Endothelial cell of umbilical vein (primary cell): ENCODE measurements at regions of chr5 and their contacts with region 1.

Region 1: GRCh38 chr5:74640450-74640953 is at the start of gene ENC1:
- DNase-seq: peak; percentile 95
- H3K4me3 ChIP-seq: peak within 1 kb of the TSS; percentile 81 to 98 (median 82)
- H3K27ac ChIP-seq: peak within 1 kb of the TSS; percentile 91
- H3K4me1 ChIP-seq: peaks cover 54% of the 10 kb centered on the region
- H3K27me3 ChIP-seq: no peaks in the 10 kb centered on the region
- CTCF ChIP-seq: peak; percentile 16 to 72
- POLR2A ChIP-seq: peak; percentile 99
- total RNA-seq, gene ENC1: 42.2 and 53.6 TPM in 2 replicates

Region 2: DNA sequence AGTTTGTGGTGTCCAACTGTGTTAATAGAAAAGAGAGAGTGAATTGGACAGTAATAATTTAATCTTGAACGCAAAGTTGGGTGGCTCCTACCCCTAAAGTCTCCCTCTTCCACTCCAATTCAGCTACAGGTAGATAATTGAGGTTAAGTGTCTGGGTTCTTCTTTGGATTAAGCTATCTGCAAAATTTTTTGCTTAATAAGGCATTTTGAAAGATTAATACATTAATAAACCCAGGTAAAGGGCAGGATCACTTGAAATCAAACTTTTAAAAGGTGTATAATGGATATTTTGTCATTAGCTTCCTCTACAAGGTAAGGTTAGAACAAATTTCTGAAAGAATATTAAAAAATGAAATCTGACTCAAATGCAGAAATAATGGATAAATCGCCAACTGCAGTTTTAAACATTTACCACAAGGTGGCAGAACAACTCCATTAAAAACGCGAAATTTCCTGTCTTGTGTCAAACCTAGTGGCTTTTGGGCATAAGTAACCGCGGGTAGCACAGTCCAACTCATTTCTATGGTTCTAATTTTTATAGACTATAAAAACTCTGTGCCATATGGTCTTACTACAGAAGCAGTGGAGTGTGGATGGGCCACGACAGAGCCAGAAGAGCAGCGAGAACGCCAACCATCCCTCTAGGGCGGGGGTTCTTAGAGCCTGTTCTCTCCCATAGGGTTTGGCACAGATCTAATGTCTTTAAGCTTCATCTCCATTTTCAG is 738.0 kb before region 1 on chr5:
- CTCF ChIA-PET with region 1: interaction called, 78 read pairs
- POLR2A ChIA-PET with region 1: interaction called, 6 read pairs
- dilution Hi-C with region 1: no loop called
- intact Hi-C with region 1: loop called (anchors 1 kb)
- DNase-seq: peak; percentile 62
- H3K4me3 ChIP-seq: no peak overlapping the region
- H3K27ac ChIP-seq: no peak overlapping the region
- H3K4me1 ChIP-seq: no peaks in the 10 kb centered on the region
- H3K27me3 ChIP-seq: no peaks in the 10 kb centered on the region
- CTCF ChIP-seq: peak; percentile 42 to 45
- POLR2A ChIP-seq: no peak

Region 3: DNA sequence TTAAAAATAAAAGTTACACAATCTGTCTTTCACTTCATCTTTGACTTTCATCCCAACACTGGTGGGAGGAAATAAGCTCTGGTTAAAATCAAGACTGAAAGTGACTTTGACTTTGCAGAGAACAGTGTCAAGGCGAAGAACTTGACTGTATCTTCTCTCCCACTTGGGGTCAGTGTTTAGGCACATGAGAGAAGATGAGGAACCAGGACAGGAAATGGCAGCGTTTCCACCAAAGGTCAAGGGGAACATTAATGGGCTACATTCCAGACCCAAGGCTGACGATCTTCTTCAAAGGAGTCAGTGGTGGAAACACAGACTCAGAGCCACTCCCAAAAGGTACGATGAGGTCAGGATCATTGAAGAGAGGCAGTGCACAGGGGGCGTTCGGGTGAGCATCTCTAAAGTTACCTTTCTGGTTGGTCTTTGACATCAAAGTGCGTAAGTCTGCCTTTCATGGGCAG is 605.0 kb before region 1 on chr5:
- CTCF ChIA-PET with region 1: interaction called, 19 read pairs
- POLR2A ChIA-PET with region 1: no interaction called
- dilution Hi-C with region 1: no loop called
- intact Hi-C with region 1: loop called (anchors 1 kb)
- DNase-seq: peak; percentile 57
- H3K4me3 ChIP-seq: no peak overlapping the region
- H3K27ac ChIP-seq: no peak overlapping the region
- H3K4me1 ChIP-seq: peaks cover 2% of the 10 kb centered on the region
- H3K27me3 ChIP-seq: peaks cover 0 to 2% of the 10 kb centered on the region in 2 experiments
- CTCF ChIP-seq: peak in 1 of 2 donors; percentile 27
- POLR2A ChIP-seq: no peak

Region 4: DNA sequence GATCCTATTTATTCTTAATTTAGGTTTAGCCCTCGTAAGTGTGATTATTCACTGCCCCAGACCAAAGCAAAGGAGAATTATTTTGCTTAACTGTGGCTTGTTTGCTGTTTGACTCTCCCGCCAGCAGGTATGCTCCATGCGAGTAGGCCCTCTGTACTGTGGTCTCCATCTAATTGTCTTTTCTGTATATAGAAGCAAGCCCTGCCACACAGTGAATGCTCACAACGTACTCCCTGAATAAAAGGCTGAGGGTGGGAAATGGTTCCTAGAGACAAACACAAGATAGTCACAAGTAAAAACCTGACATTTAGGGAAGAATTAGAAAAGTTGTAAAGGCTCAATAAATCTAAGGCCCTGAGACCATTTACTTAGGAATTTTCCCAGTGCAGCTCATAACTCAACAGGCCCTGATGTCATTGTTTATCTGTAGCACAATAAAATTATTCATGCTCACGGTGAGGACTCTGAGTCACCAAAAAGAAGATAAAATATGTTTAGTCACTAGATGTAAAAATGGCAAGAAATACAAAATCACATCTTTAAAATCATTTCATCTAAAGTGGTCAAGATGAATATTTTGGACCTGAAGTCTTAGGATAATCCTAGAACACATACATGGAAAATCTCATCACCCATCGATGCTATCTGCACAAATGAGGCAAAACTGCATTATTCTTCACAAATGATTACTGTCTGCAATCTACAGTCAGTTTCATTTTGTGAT is 473.1 kb before region 1 on chr5:
- CTCF ChIA-PET with region 1: interaction called, 4 read pairs
- POLR2A ChIA-PET with region 1: no interaction called
- dilution Hi-C with region 1: no loop called
- intact Hi-C with region 1: loop called (anchors 2 kb)
- DNase-seq: peak; percentile 84
- H3K4me3 ChIP-seq: no peak overlapping the region
- H3K27ac ChIP-seq: peak overlapping the region; percentile 60
- H3K4me1 ChIP-seq: peaks cover 20% of the 10 kb centered on the region
- H3K27me3 ChIP-seq: peaks cover 2% of the 10 kb centered on the region in 2 experiments
- CTCF ChIP-seq: no peak
- POLR2A ChIP-seq: no peak

Region 5: DNA sequence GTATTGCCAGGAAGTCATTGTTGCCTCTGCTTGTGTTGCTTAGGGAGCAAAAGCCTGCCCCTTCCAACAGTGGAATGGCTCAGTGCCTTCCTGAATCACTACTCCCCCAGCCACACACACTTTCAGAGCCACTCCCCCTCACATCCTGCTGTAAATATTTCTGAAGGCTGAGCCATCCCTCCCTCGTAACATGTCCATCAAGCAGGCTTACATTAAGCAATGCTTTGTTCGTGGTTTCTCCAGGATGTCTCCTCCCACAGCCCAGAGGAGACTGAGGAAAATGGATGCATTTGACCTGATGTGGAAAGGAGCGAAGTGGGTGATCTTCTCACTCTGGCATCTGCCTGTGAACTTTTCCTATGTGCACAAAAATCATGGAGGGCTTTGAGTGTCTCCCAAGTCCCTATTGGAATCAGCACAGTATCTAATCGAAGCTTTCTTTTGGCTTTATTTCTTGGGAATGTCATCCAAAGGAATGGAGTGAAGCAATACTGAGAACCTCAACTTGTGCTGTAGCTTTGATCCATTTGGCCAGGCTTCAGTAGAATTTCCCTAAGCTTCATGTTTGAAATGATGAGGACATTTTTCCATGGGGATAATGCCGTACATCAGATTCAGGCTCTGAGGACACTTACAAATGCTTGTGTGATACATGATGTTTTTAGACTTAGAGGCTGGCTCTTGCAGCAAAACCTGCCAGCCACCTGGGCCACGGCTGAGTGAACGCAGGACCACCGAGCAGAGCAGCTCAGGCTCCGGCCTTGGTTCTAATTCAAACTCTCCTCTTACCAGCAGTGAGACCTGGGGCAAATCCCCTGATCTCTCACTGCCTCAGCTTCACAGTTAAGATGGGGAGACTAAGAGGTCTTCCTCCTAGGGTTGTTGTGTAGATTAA is 389.1 kb before region 1 on chr5:
- CTCF ChIA-PET with region 1: interaction called, 3 read pairs
- POLR2A ChIA-PET with region 1: interaction called, 4 read pairs
- dilution Hi-C with region 1: no loop called
- intact Hi-C with region 1: loop called (anchors 1 kb)
- DNase-seq: peak; percentile 89
- H3K4me3 ChIP-seq: no peak overlapping the region
- H3K27ac ChIP-seq: no peak overlapping the region
- H3K4me1 ChIP-seq: peaks cover 9% of the 10 kb centered on the region
- H3K27me3 ChIP-seq: peaks cover 4 to 5% of the 10 kb centered on the region in 2 experiments
- CTCF ChIP-seq: no peak
- POLR2A ChIP-seq: no peak

Region 6: GRCh38 chr5:74394916-74395781 is 245.4 kb before region 1 on chr5:
- CTCF ChIA-PET with region 1: interaction called, 20 read pairs
- POLR2A ChIA-PET with region 1: no interaction called
- dilution Hi-C with region 1: no loop called
- intact Hi-C with region 1: loop called (anchors 1 kb)
- DNase-seq: no peak
- H3K4me3 ChIP-seq: no peak overlapping the region
- H3K27ac ChIP-seq: no peak overlapping the region
- H3K4me1 ChIP-seq: peaks cover 4% of the 10 kb centered on the region
- H3K27me3 ChIP-seq: no peaks in the 10 kb centered on the region
- CTCF ChIP-seq: peak in 1 of 2 donors; percentile 33
- POLR2A ChIP-seq: no peak

Region 7: DNA sequence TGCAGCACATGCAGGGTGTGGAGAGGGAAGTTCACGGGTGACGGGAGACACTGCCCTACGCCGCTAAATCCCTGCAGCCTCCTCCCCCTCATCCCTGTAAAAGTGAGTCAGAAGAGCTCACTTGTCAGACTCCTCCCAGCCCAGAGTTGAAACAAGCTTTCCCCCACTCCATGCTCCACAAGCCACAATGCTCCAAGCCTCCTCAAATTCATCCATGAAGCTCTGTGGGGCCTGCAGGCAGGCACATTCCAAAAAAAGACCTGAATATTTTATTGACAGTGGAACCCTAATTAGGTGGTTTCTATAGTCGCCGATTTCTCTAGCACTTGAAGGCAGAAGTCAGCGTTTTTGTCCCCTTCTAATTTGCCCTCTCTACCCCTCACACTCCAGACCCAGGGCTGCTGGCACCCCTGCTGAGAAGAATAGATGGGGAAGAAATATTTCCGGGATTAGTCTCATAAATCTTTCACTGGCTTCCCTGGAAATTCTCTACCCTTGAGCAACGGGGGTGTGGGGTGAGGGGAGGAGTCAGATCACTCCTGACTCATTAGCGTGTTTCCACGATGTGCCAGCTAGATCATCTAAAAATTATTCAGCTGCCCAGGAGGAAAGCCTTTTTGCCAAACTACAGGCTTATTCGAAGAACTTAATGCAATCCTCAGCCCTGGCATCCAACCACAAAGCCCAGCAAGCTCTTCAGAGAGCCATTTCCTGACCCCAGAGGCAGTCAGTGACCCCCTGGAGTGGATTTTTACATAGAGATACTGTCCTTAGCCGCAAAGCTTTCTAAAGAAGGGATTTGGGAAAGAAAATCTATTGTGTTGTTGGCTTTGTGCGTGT is 97.1 kb before region 1 on chr5:
- CTCF ChIA-PET with region 1: interaction called, 10 read pairs
- POLR2A ChIA-PET with region 1: interaction called, 9 read pairs
- dilution Hi-C with region 1: no loop called
- intact Hi-C with region 1: loop called (anchors 1 kb)
- DNase-seq: peak; percentile 77
- H3K4me3 ChIP-seq: peak overlapping the region in 1 of 3 experiments; percentile 25
- H3K27ac ChIP-seq: peak overlapping the region; percentile 80
- H3K4me1 ChIP-seq: peaks cover 17% of the 10 kb centered on the region
- H3K27me3 ChIP-seq: no peaks in the 10 kb centered on the region
- CTCF ChIP-seq: no peak
- POLR2A ChIP-seq: peak; percentile 44

Region 8: GRCh38 chr5:74717596-74717995 is 77.1 kb after region 1 on chr5:
- CTCF ChIA-PET with region 1: no interaction called
- POLR2A ChIA-PET with region 1: no interaction called
- dilution Hi-C with region 1: no loop called
- intact Hi-C with region 1: no loop called
- DNase-seq: no peak
- H3K4me3 ChIP-seq: no peak overlapping the region
- H3K27ac ChIP-seq: no peak overlapping the region
- H3K4me1 ChIP-seq: peaks cover 10% of the 10 kb centered on the region
- H3K27me3 ChIP-seq: no peaks in the 10 kb centered on the region
- CTCF ChIP-seq: no peak
- POLR2A ChIP-seq: no peak

Region 9: DNA sequence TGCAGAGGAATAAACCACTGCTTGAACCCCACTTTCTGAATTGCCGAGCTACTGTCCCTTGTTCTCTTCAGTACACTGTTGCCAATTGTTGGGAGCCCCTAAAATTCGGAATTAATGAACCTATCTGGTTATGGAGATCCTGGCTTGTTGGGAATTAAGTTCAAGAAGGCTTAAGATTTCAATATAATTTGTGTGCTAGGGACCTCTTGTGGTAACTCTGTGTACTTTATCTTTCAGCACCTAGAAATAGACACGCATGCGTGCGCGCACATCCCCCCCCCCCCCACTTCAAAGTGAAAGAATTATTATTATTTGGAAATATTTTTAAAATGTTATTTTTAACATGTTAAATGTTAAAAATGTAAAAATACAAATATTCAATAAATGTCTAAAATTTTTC is 279.0 kb after region 1 on chr5:
- CTCF ChIA-PET with region 1: no interaction called
- POLR2A ChIA-PET with region 1: no interaction called
- dilution Hi-C with region 1: no loop called
- intact Hi-C with region 1: no loop called
- DNase-seq: peak; percentile 65
- H3K4me3 ChIP-seq: no peak overlapping the region
- H3K27ac ChIP-seq: no peak overlapping the region
- H3K4me1 ChIP-seq: peaks cover 8% of the 10 kb centered on the region
- H3K27me3 ChIP-seq: no peaks in the 10 kb centered on the region
- CTCF ChIP-seq: peak; percentile 45 to 48
- POLR2A ChIP-seq: no peak